HEK293T (cell line): ENCODE measurements at regions of chr10 and their contacts with region 1.

Region 1: GRCh38 chr10:99845837-99846382 is 63.5 kb downstream of the ABCC2 start:
- DNase-seq: peak; percentile 83

Region 2: GRCh38 chr10:99859585-99859984 is 13.7 kb after region 1 on chr10:
- CTCF ChIA-PET with region 1: interaction called, 17 read pairs
- POLR2A ChIA-PET with region 1: interaction called, 3 read pairs
- DNase-seq: peak; percentile 64

Region 3: GRCh38 chr10:100046021-100046486 is 200.1 kb after region 1 on chr10:
- CTCF ChIA-PET with region 1: interaction called, 73 read pairs
- POLR2A ChIA-PET with region 1: interaction called, 4 read pairs
- DNase-seq: peak; percentile 86